OCI-LY7 (cell line): ENCODE measurements at regions of chr12 and their contacts with region 1.

Region 1: GRCh38 chr12:16347391-16348298 is at the start of gene MGST1:
- DNase-seq: peak; percentile 70
- H3K4me3 ChIP-seq: peak within 1 kb of the TSS; percentile 75
- H3K27ac ChIP-seq: peak within 1 kb of the TSS; percentile 68
- H3K4me1 ChIP-seq: peaks cover 26% of the 10 kb centered on the region
- CTCF ChIP-seq: no peak
- total RNA-seq, gene MGST1: 16.5 and 17.9 TPM in 2 replicates

Region 2: DNA sequence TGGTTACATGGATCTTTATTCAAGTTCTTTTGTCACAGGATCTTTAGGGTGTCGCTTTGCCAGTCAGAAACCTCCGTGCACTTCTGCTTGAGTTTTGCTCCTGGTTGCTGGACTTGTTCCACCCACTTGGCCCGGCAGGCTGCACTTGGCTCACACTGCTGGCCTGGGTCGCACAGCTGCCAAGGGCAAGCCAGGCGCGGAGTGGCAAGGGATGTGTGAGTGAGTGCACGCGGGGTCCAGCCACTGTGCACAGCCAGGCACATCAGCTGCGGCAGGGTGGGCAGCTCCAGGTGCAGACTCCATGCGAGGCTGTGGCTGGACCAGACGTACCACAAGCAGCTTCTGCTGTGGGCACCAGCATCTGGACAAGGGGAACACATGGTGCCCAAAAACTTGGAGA is 359.9 kb before region 1 on chr12:
- CTCF ChIA-PET with region 1: no interaction called
- POLR2A ChIA-PET with region 1: interaction called, 4 read pairs
- intact Hi-C with region 1: loop called (anchors 5 kb)
- DNase-seq: no peak
- H3K4me3 ChIP-seq: peak overlapping the region; percentile 78
- H3K27ac ChIP-seq: peak overlapping the region; percentile 87
- H3K4me1 ChIP-seq: peaks cover 47% of the 10 kb centered on the region
- CTCF ChIP-seq: no peak